ENCODE measurements at regions of chr3 and their contacts with region 1.

Region 1: GRCh38 chr3:51682079-51682478 is 11.0 kb downstream of the TEX264 start:
- DNase-seq: peak; percentile 89
- CTCF ChIP-seq: peak; percentile 78

Region 2: GRCh38 chr3:50885070-50885850 is 796.8 kb before region 1 on chr3:
- CTCF ChIA-PET with region 1: no interaction called
- POLR2A ChIA-PET with region 1: no interaction called
- DNase-seq: no peak
- CTCF ChIP-seq: no peak

Region 3: DNA sequence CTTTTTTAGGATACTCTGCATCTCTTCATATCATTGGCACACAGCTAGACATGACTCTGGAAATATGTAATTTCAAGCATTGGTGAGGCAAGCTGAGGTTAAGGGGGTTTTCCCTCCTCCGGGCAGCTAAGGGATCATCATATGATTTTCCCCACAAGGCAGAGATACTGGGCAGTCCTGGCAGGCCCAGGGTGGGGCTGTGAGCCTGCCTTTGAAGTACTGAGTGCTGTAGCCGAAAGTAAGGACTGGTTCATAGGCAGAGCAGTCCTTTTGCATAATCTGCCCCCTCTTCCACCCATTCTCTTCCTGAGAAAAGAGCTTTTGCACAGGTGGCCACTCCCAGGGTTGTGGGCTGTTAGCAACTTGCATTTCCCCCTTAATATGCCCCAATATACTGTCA is 465.8 kb before region 1 on chr3:
- CTCF ChIA-PET with region 1: no interaction called
- POLR2A ChIA-PET with region 1: no interaction called
- DNase-seq: no peak
- CTCF ChIP-seq: no peak

Region 4: DNA sequence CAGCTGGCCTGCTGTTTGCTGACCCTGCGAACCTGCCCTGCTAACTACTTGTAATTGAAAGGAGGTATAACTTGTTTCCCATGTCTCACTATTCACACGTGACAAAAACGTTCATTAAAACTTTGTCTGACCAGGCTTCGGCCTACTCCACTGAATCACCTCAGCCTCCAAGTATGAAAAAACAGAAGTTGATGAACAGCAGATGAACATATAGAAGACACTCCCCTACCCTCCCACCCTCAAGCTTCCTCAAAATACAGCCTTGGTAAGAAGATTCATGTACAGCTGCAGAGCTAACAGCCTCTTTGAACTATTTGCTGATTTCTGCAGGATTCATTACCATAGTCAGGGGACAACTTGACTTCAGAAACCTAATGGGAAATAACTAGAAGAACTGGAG is 280.3 kb before region 1 on chr3:
- CTCF ChIA-PET with region 1: interaction called, 10 read pairs
- POLR2A ChIA-PET with region 1: no interaction called
- DNase-seq: no peak
- CTCF ChIP-seq: no peak

Region 5: GRCh38 chr3:51511000-51511399 is 171.1 kb before region 1 on chr3:
- CTCF ChIA-PET with region 1: interaction called, 19 read pairs
- POLR2A ChIA-PET with region 1: no interaction called
- DNase-seq: no peak
- CTCF ChIP-seq: no peak

Region 6: DNA sequence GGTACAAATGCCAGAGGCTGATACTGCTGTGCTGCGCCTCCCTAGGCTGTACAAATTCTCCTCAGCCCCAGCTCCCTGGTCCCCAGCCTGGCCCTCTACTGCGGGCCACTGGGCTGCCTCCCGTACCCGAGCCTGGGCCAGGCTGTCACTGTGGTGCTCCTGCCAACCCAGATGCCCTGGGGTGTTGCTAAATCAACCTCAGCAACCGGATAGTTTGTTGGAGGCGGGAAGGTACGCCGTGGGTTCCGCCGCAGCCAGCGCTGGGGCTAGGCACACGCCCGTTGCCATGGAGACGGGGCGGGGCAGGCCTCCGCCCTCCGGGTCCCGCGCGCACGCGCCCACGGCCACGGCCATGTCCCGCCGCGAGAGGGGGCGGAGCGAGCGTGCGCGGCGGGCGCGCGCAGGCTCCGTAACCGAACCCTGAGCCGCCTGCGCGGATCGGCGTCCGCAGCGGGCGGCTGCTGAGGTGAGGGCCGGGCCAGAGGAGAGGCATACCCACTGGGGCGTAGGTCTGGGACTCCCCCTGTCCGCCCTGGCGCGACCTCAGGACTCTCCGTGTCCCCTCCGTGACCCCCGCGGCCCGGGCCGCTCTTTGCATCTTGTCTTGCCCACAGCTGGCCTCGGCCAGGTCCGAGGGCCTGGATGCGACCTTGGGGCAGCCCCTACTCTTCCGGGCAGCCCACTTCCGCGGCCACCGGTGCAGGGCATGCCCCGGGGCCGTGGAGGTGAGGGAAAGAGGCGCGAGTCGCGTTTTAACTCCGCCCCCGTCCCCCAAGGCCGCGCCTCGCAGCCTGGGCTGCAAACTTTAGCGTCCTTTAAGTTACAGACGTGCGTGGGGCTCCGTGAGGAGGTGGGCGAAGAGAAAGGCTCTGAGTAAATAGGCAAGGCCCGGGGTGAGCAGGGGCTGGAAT is 11.0 kb before region 1 on chr3 and contains the start of gene TEX264:
- CTCF ChIA-PET with region 1: interaction called, 159 read pairs
- POLR2A ChIA-PET with region 1: no interaction called
- DNase-seq: peak; percentile 99
- CTCF ChIP-seq: no peak

Region 7: DNA sequence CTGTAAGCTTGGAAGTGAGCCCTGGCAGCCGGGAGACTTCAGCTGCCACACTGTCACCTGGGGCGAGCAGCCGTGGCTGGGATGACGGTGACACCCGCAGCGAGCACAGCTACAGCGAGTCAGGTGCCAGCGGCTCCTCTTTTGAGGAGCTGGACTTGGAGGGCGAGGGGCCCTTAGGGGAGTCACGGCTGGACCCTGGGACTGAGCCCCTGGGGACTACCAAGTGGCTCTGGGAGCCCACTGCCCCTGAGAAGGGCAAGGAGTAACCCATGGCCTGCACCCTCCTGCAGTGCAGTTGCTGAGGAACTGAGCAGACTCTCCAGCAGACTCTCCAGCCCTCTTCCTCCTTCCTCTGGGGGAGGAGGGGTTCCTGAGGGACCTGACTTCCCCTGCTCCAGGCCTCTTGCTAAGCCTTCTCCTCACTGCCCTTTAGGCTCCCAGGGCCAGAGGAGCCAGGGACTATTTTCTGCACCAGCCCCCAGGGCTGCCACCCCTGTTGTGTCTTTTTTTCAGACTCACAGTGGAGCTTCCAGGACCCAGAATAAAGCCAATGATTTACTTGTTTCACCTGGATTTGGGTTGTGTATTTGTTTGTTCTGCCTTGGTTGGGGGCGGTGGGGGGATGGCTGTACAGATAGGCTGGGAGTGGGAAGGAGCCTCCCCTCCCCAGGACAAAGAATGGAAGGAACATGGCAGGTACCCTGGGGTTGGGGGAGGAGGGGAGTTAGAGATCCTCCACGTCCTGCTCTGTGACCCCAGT is 21.9 kb after region 1 on chr3:
- CTCF ChIA-PET with region 1: interaction called, 20 read pairs
- POLR2A ChIA-PET with region 1: no interaction called
- DNase-seq: no peak
- CTCF ChIP-seq: no peak

Measured in GM10248 (cell line).